Endothelial cell of umbilical vein (primary cell): ENCODE measurements at regions of chr15 and their contacts with region 1.

Region 1: GRCh38 chr15:98442379-98442833 is 205.9 kb upstream of the IGF1R start:
- DNase-seq: peak; percentile 71
- H3K4me3 ChIP-seq: no peak overlapping the region
- H3K27ac ChIP-seq: no peak overlapping the region
- H3K4me1 ChIP-seq: no peaks in the 10 kb centered on the region
- H3K27me3 ChIP-seq: no peaks in the 10 kb centered on the region
- CTCF ChIP-seq: peak; percentile 72 to 80
- POLR2A ChIP-seq: no peak

Region 2: GRCh38 chr15:98103570-98103969 is 338.8 kb before region 1 on chr15:
- CTCF ChIA-PET with region 1: no interaction called
- POLR2A ChIA-PET with region 1: no interaction called
- dilution Hi-C with region 1: no loop called
- intact Hi-C with region 1: no loop called
- DNase-seq: no peak
- H3K4me3 ChIP-seq: no peak overlapping the region
- H3K27ac ChIP-seq: no peak overlapping the region
- H3K4me1 ChIP-seq: no peaks in the 10 kb centered on the region
- H3K27me3 ChIP-seq: no peaks in the 10 kb centered on the region
- CTCF ChIP-seq: no peak
- POLR2A ChIP-seq: no peak

Region 3: GRCh38 chr15:98401029-98401428 is 41.4 kb before region 1 on chr15:
- CTCF ChIA-PET with region 1: no interaction called
- POLR2A ChIA-PET with region 1: no interaction called
- dilution Hi-C with region 1: no loop called
- intact Hi-C with region 1: no loop called
- DNase-seq: no peak
- H3K4me3 ChIP-seq: no peak overlapping the region
- H3K27ac ChIP-seq: no peak overlapping the region
- H3K4me1 ChIP-seq: no peaks in the 10 kb centered on the region
- H3K27me3 ChIP-seq: no peaks in the 10 kb centered on the region
- CTCF ChIP-seq: no peak
- POLR2A ChIP-seq: no peak

Region 4: DNA sequence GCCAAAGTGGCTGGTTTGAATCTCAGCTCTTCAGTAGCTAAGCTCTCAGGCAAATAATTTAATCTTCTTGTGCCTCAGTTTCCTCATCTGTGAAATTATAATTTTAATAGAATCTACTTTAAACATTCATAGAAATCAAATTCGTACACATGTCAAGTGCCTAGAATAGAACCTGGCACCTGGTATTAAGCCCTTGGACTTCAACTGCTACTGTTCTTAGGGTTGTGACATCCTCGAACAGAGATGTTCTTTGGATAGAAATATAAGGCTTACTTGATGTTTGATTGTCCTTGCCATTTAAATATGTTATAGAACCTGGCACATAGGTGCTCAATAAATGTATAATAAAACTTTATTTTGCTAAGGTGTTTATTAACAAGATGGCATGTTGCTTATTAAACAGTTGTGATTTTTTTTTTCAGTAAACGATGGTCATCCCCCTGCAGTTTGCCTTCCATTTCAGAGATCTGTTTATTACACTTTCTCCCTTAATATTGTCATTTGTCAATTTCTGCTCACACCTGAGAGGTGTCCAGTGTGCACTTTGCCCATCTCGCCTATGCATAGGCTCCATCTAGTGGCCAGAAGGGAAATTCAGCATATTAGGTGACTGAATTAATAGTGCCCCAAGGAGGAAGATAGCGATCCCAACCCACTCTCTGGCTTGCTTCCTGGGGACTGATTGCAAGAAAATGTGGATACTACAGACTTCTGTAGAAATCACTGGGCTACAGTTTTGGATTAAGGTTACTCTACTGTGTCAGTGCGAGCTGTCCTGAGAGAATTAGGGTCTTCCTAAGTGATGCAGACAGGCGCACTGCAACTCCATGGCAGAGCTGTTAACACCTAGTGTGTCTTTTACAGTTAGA is 216.7 kb after region 1 on chr15:
- CTCF ChIA-PET with region 1: no interaction called
- POLR2A ChIA-PET with region 1: no interaction called
- dilution Hi-C with region 1: no loop called
- intact Hi-C with region 1: loop called (anchors 1 kb)
- DNase-seq: peak; percentile 51
- H3K4me3 ChIP-seq: no peak overlapping the region
- H3K27ac ChIP-seq: no peak overlapping the region
- H3K4me1 ChIP-seq: peaks cover 23% of the 10 kb centered on the region
- H3K27me3 ChIP-seq: no peaks in the 10 kb centered on the region
- CTCF ChIP-seq: peak; percentile 75 to 81
- POLR2A ChIP-seq: no peak

Region 5: GRCh38 chr15:98779463-98780071 is 337.2 kb after region 1 on chr15:
- CTCF ChIA-PET with region 1: no interaction called
- POLR2A ChIA-PET with region 1: no interaction called
- dilution Hi-C with region 1: no loop called
- intact Hi-C with region 1: loop called (anchors 10 kb)
- DNase-seq: peak; percentile 77
- H3K4me3 ChIP-seq: no peak overlapping the region
- H3K27ac ChIP-seq: no peak overlapping the region
- H3K4me1 ChIP-seq: peaks cover 5% of the 10 kb centered on the region
- H3K27me3 ChIP-seq: no peaks in the 10 kb centered on the region
- CTCF ChIP-seq: peak; percentile 93 to 95
- POLR2A ChIP-seq: no peak

Region 6: DNA sequence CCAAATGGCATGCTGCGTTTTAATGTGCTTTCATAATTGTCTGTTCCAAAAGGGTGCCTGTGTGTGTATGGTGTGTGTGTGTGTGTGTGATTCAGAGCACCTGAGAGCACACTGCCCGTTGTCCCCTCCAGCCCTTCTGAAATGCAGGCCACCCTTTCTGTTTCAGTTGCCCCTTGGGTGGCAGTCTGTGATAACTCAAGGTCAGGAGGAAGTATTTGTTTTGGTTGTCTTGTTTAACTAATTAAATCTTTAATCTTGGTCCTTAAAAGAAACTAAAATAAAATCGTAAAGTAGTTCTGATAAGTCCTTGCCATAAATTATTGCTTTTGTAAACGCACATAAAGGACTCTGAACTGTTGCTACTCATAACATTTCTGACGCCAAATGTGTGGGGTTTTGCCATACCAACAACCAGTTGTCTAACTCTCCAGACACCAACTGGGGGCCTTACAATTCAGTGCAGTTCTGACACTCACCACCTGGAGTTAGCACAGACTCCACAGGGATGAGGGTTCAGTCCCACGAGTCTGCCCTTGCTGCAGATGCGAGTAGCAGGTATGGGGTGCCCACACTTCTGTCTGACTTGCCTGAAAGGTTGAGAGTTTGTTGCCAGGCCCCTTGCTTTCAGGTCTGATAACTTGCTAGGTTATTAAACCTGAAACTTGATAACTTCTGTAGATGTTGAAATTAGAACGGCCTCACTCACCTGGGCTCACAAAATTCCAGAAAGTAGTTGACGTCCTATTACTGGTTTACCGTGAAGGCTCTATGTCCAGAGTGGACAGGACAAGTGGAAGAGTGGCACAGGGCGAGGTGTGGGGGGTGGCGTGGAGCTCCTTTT is 363.2 kb after region 1 on chr15:
- CTCF ChIA-PET with region 1: no interaction called
- POLR2A ChIA-PET with region 1: no interaction called
- dilution Hi-C with region 1: no loop called
- intact Hi-C with region 1: no loop called
- DNase-seq: no peak
- H3K4me3 ChIP-seq: no peak overlapping the region
- H3K27ac ChIP-seq: no peak overlapping the region
- H3K4me1 ChIP-seq: peaks cover 24% of the 10 kb centered on the region
- H3K27me3 ChIP-seq: no peaks in the 10 kb centered on the region
- CTCF ChIP-seq: peak in 1 of 2 donors; percentile 33
- POLR2A ChIP-seq: no peak

Region 7: GRCh38 chr15:98904544-98904943 is 462.1 kb after region 1 on chr15:
- CTCF ChIA-PET with region 1: no interaction called
- POLR2A ChIA-PET with region 1: no interaction called
- dilution Hi-C with region 1: no loop called
- intact Hi-C with region 1: loop called (anchors 1 kb)
- DNase-seq: peak; percentile 53
- H3K4me3 ChIP-seq: no peak overlapping the region
- H3K27ac ChIP-seq: peak overlapping the region; percentile 15
- H3K4me1 ChIP-seq: peaks cover 42% of the 10 kb centered on the region
- H3K27me3 ChIP-seq: no peaks in the 10 kb centered on the region
- CTCF ChIP-seq: peak; percentile 52 to 58
- POLR2A ChIP-seq: no peak

Region 8: GRCh38 chr15:99059010-99059981 is 616.9 kb after region 1 on chr15:
- CTCF ChIA-PET with region 1: no interaction called
- POLR2A ChIA-PET with region 1: no interaction called
- dilution Hi-C with region 1: no loop called
- intact Hi-C with region 1: loop called (anchors 1 kb)
- DNase-seq: peak; percentile 61
- H3K4me3 ChIP-seq: peak overlapping the region; percentile 34 to 60 (median 40)
- H3K27ac ChIP-seq: peak overlapping the region; percentile 12
- H3K4me1 ChIP-seq: peaks cover 8% of the 10 kb centered on the region
- H3K27me3 ChIP-seq: peaks cover 0 to 5% of the 10 kb centered on the region in 2 experiments
- CTCF ChIP-seq: peak; percentile 56 to 85
- POLR2A ChIP-seq: no peak

Region 9: GRCh38 chr15:99213187-99213811 is 770.9 kb after region 1 on chr15:
- CTCF ChIA-PET with region 1: no interaction called
- POLR2A ChIA-PET with region 1: no interaction called
- dilution Hi-C with region 1: no loop called
- intact Hi-C with region 1: loop called (anchors 1 kb)
- DNase-seq: peak; percentile 77
- H3K4me3 ChIP-seq: no peak overlapping the region
- H3K27ac ChIP-seq: no peak overlapping the region
- H3K4me1 ChIP-seq: peaks cover 11% of the 10 kb centered on the region
- H3K27me3 ChIP-seq: no peaks in the 10 kb centered on the region
- CTCF ChIP-seq: peak; percentile 79 to 83
- POLR2A ChIP-seq: no peak